ENCODE measurements at regions of chr1 and their contacts with region 1.

Region 1: DNA sequence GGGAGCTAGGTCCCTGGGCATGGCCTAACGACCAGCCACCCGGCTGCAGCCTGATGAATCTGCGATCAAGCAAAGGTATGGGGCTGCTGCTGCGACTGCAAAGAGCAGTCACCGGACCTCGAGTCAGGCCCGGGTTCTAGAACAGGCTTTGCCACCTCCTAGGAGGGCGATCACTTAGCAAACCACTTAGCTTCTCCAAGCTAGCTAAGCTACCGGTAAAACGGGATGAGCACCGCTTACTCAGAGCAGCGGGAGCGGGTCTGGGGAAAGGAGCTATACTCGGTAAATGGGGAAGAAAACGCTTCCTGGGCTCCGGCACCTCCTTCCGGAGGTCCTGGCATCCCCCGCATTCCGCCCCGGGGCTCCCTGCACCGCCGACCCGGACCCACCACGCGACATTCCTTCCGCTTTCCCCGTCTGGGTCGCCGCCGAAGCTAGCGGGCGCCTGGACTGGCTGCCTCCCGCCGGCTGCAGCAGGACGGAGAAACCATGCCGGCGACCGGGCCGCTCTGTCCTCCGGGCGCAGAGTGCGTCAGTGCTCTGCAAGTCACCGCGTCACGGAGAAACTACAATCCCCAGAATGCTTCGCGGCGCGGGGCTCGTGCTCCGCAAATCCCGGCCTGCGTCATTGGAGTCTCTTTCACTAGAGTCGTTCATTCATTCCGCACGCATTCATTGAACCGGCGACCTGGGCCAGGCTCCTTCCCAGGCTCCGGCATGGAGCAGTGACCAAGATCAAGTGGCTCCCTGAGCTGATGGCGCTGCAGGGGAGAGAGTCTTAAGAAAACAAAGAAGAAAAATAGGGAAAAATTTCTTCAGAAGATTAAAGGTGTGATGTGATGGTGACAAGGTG is at the start of gene LSM10:
- DNase-seq: peak; percentile 96
- ATAC-seq: peak; percentile 86
- H3K4me3 Mint-ChIP-seq: peak within 1 kb of the TSS; percentile 84
- H3K27ac Mint-ChIP-seq: peak within 1 kb of the TSS; percentile 99
- H3K4me1 Mint-ChIP-seq: peaks cover 29% of the 10 kb centered on the region
- H3K27me3 Mint-ChIP-seq: no peaks in the 10 kb centered on the region
- CTCF ChIP-seq: no peak
- total RNA-seq, gene LSM10: 43.8 to 46.2 TPM

Region 2: DNA sequence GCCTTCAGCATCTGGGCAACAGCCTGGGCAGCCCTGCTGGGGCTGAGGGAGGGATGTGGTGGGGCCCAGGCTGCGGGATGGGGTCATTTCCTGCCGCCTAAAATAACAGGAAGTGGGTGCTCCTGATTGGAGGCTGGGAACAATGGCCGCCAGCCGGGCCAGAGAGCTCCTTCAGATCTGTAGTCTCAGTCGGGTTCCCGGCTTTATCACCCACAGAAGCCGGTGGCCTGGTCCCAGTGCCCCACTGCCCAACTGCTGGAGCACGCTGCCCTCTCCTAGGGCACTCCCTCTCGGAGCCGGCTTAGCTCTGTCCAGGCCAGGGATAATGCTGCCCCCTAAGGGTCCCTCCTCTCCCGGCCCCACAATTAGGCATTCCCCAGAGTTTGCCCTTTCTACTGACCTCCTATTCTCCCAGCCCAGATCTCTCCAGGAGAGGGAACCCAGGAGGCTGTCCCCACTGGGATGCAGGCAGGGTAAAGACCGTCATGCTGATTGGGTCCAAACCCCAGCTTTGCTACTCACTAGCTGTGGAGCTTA is 236.6 kb before region 1 on chr1:
- CTCF ChIA-PET with region 1: no interaction called
- POLR2A ChIA-PET with region 1: interaction called, 10 read pairs
- intact Hi-C with region 1: no loop called
- DNase-seq: peak; percentile 88
- ATAC-seq: peak; percentile 56
- H3K4me3 Mint-ChIP-seq: peak overlapping the region; percentile 80
- H3K27ac Mint-ChIP-seq: peak overlapping the region; percentile 94
- H3K4me1 Mint-ChIP-seq: peaks cover 60% of the 10 kb centered on the region
- H3K27me3 Mint-ChIP-seq: no peaks in the 10 kb centered on the region
- CTCF ChIP-seq: no peak

Region 3: DNA sequence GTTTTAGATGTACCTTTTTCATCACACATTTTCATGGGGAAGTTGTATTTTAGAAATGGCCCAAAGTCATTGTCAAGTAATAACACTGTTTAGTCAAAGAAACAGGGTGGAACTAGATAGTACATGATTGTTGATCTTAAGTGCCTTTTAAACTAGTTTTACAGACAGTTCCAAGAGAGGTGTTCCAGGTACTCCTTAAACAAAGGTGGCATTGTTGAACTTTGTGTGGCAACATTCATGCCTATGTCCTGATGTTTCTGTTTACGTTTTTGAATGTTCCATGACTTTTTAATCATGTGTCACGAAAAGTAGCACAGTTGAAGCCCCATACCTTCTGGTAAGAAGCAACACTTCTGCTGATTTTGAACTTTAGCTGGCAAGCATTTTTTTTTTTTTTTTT is 100.5 kb before region 1 on chr1:
- CTCF ChIA-PET with region 1: no interaction called
- POLR2A ChIA-PET with region 1: no interaction called
- intact Hi-C with region 1: no loop called
- DNase-seq: no peak
- ATAC-seq: no peak
- H3K4me3 Mint-ChIP-seq: no peak overlapping the region
- H3K27ac Mint-ChIP-seq: no peak overlapping the region
- H3K4me1 Mint-ChIP-seq: peaks cover 21% of the 10 kb centered on the region
- H3K27me3 Mint-ChIP-seq: no peaks in the 10 kb centered on the region
- CTCF ChIP-seq: no peak

Region 4: DNA sequence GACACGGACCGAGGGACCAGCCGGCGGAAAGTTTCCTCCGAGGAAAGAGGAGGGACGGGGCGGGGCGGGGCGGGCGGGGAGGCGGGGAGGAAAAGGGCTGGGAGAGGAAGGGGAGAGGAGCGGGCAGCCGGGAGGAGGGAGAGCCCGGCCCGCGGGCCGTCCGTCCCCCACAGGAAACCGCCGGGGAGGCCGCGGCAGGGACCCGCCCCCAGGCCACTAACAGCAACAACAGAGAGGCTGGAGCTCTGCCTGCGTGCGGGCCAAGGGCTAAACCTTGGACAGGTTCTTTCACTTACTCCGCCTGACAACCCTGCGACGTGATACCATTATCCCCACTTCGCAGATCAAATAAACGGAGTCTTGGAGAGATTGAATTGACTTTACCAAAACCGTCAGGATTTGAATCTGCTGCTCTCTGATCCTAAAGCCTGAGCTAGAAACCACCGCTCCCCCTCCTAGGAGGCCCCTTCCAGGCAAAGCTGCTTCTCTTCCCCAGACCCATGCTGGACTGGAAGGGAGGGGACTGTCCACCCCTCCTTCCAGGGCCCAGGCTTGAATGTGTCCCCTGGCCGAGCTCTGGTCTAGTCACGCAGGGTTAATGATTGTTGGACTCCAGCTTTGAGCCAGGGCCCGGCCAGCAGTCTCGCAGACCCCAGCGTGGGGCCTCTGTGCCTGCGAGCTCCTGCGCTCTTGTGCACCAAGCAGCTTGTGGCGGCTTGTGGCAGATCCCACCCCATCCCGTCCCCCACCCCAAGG is 73.8 kb before region 1 on chr1 and contains the start of gene EVA1B:
- CTCF ChIA-PET with region 1: no interaction called
- POLR2A ChIA-PET with region 1: interaction called, 10 read pairs
- intact Hi-C with region 1: no loop called
- DNase-seq: peak; percentile 68
- ATAC-seq: peak; percentile 43
- H3K4me3 Mint-ChIP-seq: peak within 1 kb of the TSS; percentile 75
- H3K27ac Mint-ChIP-seq: peak within 1 kb of the TSS; percentile 49
- H3K4me1 Mint-ChIP-seq: peaks cover 30% of the 10 kb centered on the region
- H3K27me3 Mint-ChIP-seq: peaks cover 5% of the 10 kb centered on the region
- CTCF ChIP-seq: no peak
- total RNA-seq, gene EVA1B: 5.8 to 6.5 TPM

Region 5: GRCh38 chr1:36369061-36369861 is 28.3 kb before region 1 on chr1:
- CTCF ChIA-PET with region 1: interaction called, 29 read pairs
- POLR2A ChIA-PET with region 1: interaction called, 4 read pairs
- intact Hi-C with region 1: no loop called
- DNase-seq: peak; percentile 93
- ATAC-seq: peak; percentile 57
- H3K4me3 Mint-ChIP-seq: no peak overlapping the region
- H3K27ac Mint-ChIP-seq: peak overlapping the region; percentile 34
- H3K4me1 Mint-ChIP-seq: peaks cover 67% of the 10 kb centered on the region
- H3K27me3 Mint-ChIP-seq: no peaks in the 10 kb centered on the region
- CTCF ChIP-seq: peak; percentile 89

Region 6: GRCh38 chr1:36385410-36386257 is 12.0 kb before region 1 on chr1 and contains the start of gene STK40:
- CTCF ChIA-PET with region 1: interaction called, 12 read pairs
- POLR2A ChIA-PET with region 1: interaction called, 119 read pairs
- intact Hi-C with region 1: no loop called
- DNase-seq: peak; percentile 98
- ATAC-seq: peak; percentile 90
- H3K4me3 Mint-ChIP-seq: peak within 1 kb of the TSS; percentile 80
- H3K27ac Mint-ChIP-seq: peak within 1 kb of the TSS; percentile 98
- H3K4me1 Mint-ChIP-seq: peaks cover 46% of the 10 kb centered on the region
- H3K27me3 Mint-ChIP-seq: no peaks in the 10 kb centered on the region
- CTCF ChIP-seq: no peak
- total RNA-seq, gene STK40: 41.2 to 44.4 TPM

Region 7: GRCh38 chr1:36411674-36412520 is 14.3 kb after region 1 on chr1:
- CTCF ChIA-PET with region 1: interaction called, 10 read pairs
- POLR2A ChIA-PET with region 1: interaction called, 12 read pairs
- intact Hi-C with region 1: no loop called
- DNase-seq: peak; percentile 84
- ATAC-seq: peak; percentile 99
- H3K4me3 Mint-ChIP-seq: peak overlapping the region; percentile 29
- H3K27ac Mint-ChIP-seq: peak overlapping the region; percentile 89
- H3K4me1 Mint-ChIP-seq: peaks cover 16% of the 10 kb centered on the region
- H3K27me3 Mint-ChIP-seq: no peaks in the 10 kb centered on the region
- CTCF ChIP-seq: no peak

Region 8: DNA sequence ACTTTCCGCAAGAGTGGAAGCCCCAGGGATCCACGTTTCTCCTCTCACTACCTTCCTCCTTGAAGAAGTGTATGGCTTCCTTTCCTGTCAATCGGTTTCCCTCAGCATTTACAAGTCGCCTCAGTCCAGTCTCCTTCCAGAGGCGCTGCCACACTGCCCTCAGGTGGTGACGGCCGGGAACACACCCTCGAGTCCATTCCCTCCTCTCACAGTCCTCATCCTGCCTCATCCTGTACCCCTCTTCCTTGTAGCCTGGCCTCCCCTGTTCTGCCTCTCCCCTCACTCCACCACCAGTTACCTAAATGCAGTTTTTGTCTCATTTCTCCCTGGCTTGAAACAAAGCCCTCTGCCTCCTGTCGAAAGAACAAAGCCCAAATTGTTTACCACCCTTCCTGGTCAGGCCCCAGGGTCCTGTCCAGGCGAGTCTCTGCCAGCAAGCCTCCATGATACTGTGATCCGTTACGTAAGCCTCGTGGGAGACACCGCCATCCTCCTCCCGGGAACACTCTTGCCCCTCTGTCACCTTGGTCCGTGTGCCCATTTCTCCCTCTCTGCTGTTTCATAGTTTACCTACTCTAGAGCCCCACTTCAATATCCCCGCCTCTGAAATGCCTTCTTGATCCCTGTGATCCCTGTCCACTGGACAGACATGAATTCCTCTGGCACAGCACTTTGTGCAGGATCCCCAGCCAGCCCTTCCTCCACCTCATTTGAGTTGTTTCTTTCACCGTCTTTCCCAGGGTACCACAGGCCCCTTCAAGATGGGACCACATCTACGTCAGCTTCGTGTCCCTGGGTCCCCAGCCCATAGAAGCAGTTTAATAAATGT is 23.4 kb after region 1 on chr1:
- CTCF ChIA-PET with region 1: interaction called, 13 read pairs
- POLR2A ChIA-PET with region 1: interaction called, 3 read pairs
- intact Hi-C with region 1: no loop called
- DNase-seq: peak; percentile 95
- ATAC-seq: peak; percentile 100
- H3K4me3 Mint-ChIP-seq: no peak overlapping the region
- H3K27ac Mint-ChIP-seq: peak overlapping the region; percentile 91
- H3K4me1 Mint-ChIP-seq: peaks cover 16% of the 10 kb centered on the region
- H3K27me3 Mint-ChIP-seq: no peaks in the 10 kb centered on the region
- CTCF ChIP-seq: peak; percentile 94

Region 9: DNA sequence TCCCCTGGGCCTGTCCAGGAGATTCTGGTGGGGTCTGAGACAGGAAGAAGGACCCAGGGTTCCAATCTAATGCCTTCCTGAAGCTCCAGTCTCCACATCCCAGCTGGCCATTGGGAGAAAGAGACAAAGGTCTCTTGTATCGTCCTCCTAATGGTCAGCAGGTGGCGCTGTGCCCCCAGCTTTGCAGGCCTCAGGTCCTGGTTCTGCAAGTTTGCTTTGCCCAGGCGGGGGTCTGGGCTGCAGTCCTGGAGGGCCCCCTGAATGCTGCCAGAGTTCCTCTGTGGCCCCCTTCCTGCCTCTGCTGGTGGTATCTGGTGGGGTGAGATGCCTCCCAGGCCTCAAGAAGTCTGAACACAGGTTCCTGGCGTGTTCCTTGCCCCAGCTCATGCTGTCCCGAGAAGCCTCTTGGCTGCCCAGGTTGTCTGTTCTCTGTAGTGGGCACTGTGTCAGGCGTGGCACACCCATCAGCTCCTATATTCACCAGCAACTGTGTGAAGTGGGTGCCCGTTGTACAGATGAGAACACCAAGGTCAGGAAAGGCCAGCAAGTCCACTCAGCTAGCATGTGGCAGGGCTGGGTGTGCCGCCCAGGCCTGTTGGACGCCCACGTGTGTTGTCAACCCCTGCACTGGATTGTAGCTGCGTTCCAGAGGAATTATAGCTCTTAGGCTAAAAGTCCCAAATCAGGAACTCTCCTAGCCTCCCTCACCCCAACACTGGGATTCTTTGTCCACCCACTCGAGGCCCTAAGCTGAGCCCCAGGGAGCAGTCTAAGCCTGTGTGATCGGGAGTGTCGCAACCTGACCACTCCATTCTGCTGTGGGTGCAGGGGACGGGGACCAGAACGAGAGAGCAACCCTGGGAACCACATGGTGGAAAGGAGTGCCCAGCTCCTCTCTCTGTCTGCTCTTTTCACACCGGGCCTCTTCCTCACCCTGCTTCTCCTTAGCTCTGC is 119.0 kb after region 1 on chr1:
- CTCF ChIA-PET with region 1: no interaction called
- POLR2A ChIA-PET with region 1: no interaction called
- intact Hi-C with region 1: no loop called
- DNase-seq: peak; percentile 66
- ATAC-seq: peak; percentile 72
- H3K4me3 Mint-ChIP-seq: no peak overlapping the region
- H3K27ac Mint-ChIP-seq: no peak overlapping the region
- H3K4me1 Mint-ChIP-seq: no peaks in the 10 kb centered on the region
- H3K27me3 Mint-ChIP-seq: no peaks in the 10 kb centered on the region
- CTCF ChIP-seq: peak; percentile 93

Region 10: GRCh38 chr1:36528361-36529349 is 131.1 kb after region 1 on chr1:
- CTCF ChIA-PET with region 1: no interaction called
- POLR2A ChIA-PET with region 1: no interaction called
- intact Hi-C with region 1: no loop called
- DNase-seq: no peak
- ATAC-seq: no peak
- H3K4me3 Mint-ChIP-seq: no peak overlapping the region
- H3K27ac Mint-ChIP-seq: no peak overlapping the region
- H3K4me1 Mint-ChIP-seq: peaks cover 8% of the 10 kb centered on the region
- H3K27me3 Mint-ChIP-seq: peaks cover 3% of the 10 kb centered on the region
- CTCF ChIP-seq: no peak

Region 11: GRCh38 chr1:36603461-36603860 is 205.9 kb after region 1 on chr1:
- CTCF ChIA-PET with region 1: no interaction called
- POLR2A ChIA-PET with region 1: no interaction called
- intact Hi-C with region 1: no loop called
- DNase-seq: no peak
- ATAC-seq: no peak
- H3K4me3 Mint-ChIP-seq: no peak overlapping the region
- H3K27ac Mint-ChIP-seq: no peak overlapping the region
- H3K4me1 Mint-ChIP-seq: peaks cover 12% of the 10 kb centered on the region
- H3K27me3 Mint-ChIP-seq: peaks cover 6% of the 10 kb centered on the region
- CTCF ChIP-seq: no peak

Measured in activated CD8-positive, alpha-beta T cell treated with anti-CD3 and anti-CD28 coated beads for 36 hours (primary cell).